ENCODE measurements at regions of chr6 and their contacts with region 1.

Region 1: DNA sequence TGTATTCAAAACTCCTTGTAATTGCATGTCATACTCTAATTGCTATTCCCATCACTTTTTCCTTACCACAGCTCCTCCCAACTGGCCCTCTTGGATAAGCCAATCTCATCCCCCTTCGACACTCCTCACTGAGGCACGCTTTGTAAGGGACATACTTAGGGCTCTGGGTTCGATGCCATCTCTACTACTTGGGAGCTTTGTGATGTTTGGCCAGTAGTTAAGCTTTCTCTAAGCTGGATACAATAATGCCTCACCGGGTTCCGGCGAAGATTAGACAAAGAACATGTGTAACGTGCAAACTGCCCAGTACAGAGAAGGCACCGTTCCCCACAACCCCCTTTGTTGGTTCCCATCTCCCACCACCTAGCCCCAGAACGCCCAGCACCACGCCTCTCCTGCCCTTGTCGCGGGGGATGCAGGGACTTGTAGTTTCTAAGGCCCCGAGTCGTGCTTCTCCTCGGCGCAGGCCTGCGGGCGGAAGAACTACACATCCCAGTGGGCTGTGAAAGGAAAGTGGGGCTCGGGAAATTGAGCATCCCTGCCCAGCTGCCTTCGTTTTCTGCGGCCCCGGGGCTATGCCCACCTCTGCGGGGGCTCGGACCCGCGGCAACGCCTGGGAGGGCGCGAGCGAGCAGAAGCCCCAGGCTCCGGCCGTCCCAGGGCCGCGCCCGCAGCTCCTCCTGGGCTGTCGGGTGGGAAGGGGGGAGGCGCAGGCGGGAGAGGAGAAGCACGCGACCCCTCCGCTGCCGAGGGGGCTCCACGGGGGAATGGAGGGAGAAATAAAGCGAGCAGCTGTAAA is 1.1 kb upstream of the ZDHHC14 start:
- DNase-seq: peak; percentile 91 to 97 (median 95)
- ATAC-seq: peak; percentile 94 to 95
- H3K4me3 ChIP-seq: peak overlapping the region; percentile 90
- H3K27ac ChIP-seq: peak overlapping the region; percentile 91
- H3K4me1 ChIP-seq: no peaks in the 10 kb centered on the region
- H3K27me3 ChIP-seq: no peaks in the 10 kb centered on the region

Region 2: DNA sequence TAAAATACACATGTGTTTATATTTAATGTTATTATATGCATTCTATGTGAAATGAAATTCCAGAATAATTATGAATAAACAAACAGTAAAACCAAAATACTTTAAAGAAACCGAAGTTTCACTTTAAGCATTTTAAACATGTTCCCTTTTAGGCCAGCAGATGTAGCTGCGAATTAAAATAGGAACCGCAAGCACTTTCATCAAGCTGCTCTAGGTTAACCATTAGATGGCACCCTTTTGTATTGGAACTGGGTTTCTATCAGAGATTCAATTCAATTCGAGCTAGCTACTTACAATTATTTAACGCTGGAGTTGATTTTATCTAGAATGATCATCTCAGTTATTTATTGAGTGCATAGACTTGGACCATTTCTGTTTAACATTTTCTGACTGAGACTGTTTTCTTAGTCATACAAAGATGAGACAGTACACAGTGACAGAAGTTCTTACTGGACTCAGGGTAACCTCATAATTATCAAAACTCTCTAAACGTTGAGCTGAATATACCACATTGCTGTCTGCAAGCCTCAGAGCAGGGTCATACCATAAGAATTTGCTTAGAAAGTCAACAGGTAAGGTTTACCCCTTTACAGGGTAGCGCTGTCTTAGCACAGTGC is 65.0 kb before region 1 on chr6:
- intact Hi-C with region 1: loop called in 3 of 4 experiments (anchors 5 to 10 kb)
- DNase-seq: no peak
- ATAC-seq: peak; percentile 51 to 58
- H3K4me3 ChIP-seq: no peak overlapping the region
- H3K27ac ChIP-seq: no peak overlapping the region
- H3K4me1 ChIP-seq: peaks cover 2% of the 10 kb centered on the region
- H3K27me3 ChIP-seq: no peaks in the 10 kb centered on the region

Region 3: GRCh38 chr6:157329829-157330228 is 50.0 kb before region 1 on chr6:
- intact Hi-C with region 1: loop called (anchors 5 to 10 kb)
- DNase-seq: no peak
- ATAC-seq: no peak
- H3K4me3 ChIP-seq: no peak overlapping the region
- H3K27ac ChIP-seq: peak overlapping the region; percentile 42
- H3K4me1 ChIP-seq: peaks cover 2% of the 10 kb centered on the region
- H3K27me3 ChIP-seq: no peaks in the 10 kb centered on the region

Region 4: DNA sequence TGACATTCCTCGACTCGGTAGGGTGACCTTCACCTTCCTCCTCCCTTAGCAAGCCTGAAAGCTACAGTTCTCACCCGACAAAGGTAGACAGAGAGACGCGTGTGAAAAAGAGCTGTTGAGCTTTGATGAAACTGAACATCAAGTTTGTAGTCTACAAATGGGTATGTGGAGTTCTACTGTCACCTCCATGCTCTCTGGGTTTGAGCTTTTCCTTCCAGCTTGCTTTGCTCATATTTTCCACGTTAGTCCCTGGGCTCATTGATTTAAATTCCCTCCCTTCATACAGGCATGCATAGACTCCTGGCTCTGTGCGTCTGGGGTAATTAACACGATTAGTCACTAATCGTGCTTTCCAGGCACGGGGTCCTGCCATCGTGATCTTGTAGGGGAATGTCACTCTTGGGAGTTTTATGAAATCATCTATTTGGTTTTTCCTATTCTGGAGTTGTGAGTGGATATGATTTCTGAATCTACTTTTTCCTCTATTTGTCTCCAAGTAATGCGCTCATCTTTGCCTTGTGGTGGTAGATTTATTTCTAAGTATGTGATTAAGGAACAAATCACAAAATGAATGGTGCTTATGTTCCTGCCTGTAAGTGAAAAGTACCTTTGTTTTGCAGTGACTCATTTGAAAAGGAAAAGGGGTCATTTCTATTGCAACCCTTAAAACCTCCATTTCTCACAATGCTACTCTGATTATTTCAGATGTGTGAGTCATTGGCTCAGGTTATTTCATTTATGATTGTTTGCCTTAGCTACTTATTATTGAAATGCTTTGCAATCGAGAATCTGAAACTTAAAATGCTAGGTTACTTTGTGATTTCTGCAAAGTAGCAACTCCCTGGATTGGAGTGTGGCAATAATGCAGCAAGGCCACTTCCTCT is 155.7 kb after region 1 on chr6:
- intact Hi-C with region 1: loop called in 1 of 4 experiments (anchors 10 kb)
- DNase-seq: no peak
- ATAC-seq: no peak
- H3K4me3 ChIP-seq: no peak overlapping the region
- H3K27ac ChIP-seq: no peak overlapping the region
- H3K4me1 ChIP-seq: peaks cover 21% of the 10 kb centered on the region
- H3K27me3 ChIP-seq: no peaks in the 10 kb centered on the region

Region 5: DNA sequence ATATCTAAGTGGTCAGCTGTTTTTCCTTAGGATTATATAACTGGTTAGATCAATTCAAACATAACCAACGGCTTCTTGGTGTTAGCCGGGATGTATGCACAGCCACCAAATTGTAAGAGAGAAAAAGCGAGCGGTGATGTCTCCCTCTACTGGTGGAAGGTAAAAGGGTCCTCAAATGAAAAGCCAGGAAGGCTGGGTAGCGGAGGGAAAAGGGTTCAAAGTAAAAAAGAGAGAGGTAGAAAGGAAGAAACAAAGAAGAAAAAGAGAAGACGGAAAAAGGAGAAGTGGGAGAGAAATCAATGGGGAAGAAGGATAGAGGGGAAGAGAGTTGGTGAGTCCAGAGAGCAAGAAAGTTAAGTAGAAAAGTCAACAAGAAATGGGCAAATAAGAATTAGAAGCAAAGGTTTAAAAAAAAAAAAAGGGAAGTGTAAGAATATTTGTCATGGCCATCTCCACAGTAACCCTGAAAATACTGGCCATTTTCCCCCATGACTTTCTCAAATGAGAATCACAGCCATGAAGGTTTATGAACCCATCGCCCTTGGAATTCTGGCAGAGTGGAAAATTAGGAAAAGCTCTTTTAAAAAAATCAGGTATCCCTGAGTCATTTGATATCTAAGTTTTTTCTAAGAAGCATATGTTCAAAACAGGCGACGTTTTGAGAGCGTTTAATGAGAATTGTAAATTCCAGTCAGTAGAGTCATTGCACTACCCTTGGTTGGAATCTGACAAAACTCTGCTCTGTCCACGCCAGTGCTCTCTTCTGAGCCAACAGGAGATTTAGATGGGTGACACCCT is 287.6 kb after region 1 on chr6:
- intact Hi-C with region 1: loop called in 1 of 4 experiments (anchors 10 kb)
- DNase-seq: no peak
- ATAC-seq: no peak
- H3K4me3 ChIP-seq: no peak overlapping the region
- H3K27ac ChIP-seq: no peak overlapping the region
- H3K4me1 ChIP-seq: peaks cover 6% of the 10 kb centered on the region
- H3K27me3 ChIP-seq: no peaks in the 10 kb centered on the region